GM10248 (cell line): ENCODE measurements at regions of chr1 and their contacts with region 1.

Region 1: GRCh38 chr1:23916209-23917131 is 3.3 kb upstream of the CNR2 start:
- DNase-seq: peak; percentile 87
- CTCF ChIP-seq: peak; percentile 74

Region 2: GRCh38 chr1:23772049-23772853 is 144.2 kb before region 1 on chr1:
- CTCF ChIA-PET with region 1: interaction called, 67 read pairs
- POLR2A ChIA-PET with region 1: interaction called, 5 read pairs
- DNase-seq: peak; percentile 77
- CTCF ChIP-seq: peak; percentile 96

Region 3: DNA sequence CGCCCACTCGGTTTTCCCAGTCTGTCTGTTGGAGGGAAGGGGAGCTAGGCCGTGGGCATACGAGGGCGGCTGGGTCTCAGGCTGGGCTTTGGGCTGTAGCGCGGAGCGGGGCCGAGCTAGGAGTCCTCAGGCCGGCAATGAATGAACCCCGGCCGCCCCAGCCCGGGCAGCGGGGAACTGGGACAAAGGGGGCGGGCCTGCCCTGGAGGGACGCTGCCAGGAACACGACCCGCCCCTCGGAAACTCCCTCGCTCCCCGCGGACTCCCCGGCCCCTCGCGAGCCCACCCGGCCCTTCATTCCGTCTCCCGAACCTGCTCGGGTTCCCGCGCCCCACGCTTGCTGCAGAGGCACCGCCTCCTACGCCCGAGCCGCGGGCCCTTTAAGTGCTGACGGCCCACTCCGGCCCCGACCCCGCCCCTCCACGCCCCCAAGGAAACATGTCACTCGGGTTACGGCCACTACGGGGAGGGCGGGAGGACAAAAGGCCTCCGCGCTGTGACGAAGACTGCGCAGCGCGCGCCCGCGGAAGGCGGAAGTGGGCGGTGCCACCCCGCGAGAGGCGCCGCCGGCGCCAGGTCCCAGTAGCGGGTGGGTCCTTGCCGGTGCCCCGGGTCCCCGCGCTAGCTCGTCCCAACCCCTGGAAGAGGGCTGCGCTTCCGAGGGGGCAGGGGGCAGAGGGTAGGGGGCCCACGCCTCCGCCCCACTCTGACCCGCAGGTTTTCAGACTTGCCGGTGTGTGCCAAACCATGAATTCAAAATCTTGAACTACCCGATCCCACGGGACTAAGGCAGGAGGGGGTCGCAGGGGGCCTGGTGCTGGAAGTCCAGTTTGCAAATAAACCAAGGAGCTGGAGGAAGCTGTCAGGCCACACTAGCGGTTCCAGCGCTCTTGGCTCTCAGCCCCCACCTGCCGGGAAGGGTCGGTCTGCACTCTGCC is 115.8 kb before region 1 on chr1 and contains the start of gene GALE:
- CTCF ChIA-PET with region 1: interaction called, 11 read pairs
- POLR2A ChIA-PET with region 1: no interaction called
- DNase-seq: peak; percentile 99
- CTCF ChIP-seq: no peak

Region 4: GRCh38 chr1:23867953-23868556 is 48.4 kb before region 1 on chr1 and contains the start of gene FUCA1:
- CTCF ChIA-PET with region 1: interaction called, 13 read pairs
- POLR2A ChIA-PET with region 1: no interaction called
- DNase-seq: peak; percentile 98
- CTCF ChIP-seq: peak; percentile 94

Region 5: DNA sequence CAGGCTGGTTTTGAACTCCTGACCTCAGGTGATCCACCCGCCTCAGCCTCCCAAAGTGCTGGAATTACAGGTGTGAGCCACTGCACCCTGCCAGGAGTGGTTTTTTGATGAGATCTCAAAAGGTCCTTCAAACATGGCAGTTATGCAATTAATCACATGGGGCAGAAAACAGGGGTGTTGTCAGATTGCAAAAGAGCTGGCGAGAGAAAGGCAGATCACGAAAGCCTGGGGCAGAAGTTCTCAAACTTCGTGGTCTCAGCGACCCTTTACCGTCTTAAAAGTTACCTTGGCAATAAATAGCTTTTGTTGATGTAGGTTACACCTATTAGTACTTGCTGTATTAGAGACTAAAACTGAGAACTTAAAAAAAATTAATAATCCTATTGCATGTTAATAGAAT is 19.4 kb before region 1 on chr1:
- CTCF ChIA-PET with region 1: interaction called, 14 read pairs
- POLR2A ChIA-PET with region 1: no interaction called
- DNase-seq: no peak
- CTCF ChIP-seq: no peak